GM10248 (cell line): ENCODE measurements at regions of chr5 and their contacts with region 1.

Region 1: GRCh38 chr5:36695677-36696673 is 89.6 kb downstream of the SLC1A3 start:
- DNase-seq: peak; percentile 57
- CTCF ChIP-seq: peak; percentile 50

Region 2: DNA sequence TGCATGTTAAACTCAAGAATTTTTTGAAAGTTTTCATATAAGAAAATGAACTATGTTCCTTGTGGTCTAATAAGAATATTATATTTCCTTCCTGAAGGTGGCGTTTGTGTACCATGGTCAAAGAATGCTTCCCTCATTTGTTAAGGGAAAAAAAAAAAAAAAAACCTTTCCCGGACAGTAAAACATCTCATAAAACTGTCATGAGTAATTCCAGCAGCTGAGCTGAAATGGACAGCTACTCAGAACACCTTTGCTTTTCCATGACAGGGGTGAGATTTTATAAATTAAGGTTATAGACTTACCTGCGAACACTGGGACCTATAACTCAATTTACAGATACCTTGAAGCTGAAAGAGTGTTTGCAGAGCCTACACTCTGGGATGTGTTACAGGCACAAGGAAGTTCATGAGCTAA is 281.1 kb before region 1 on chr5:
- CTCF ChIA-PET with region 1: interaction called, 17 read pairs
- POLR2A ChIA-PET with region 1: no interaction called
- DNase-seq: no peak
- CTCF ChIP-seq: peak; percentile 16

Region 3: DNA sequence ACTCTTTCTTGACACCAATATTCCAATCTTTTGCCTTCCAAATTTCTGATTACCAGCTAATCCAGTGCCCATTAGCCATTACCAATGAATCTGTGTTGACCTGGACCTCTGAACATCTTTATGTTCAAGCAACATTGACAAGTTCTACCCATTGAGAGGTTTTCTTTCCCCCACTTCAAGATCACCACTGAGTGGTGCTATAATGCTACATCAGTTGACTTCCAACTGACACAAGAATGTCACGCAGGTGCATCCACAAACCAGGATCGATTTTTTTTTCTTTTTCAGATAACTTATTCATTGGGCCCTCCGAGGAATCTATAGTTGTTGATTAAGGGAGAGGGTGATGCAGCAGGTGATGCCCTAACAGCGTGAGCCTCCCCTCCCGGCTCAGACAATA is 13.0 kb after region 1 on chr5:
- CTCF ChIA-PET with region 1: interaction called, 189 read pairs
- POLR2A ChIA-PET with region 1: interaction called, 3 read pairs
- DNase-seq: no peak
- CTCF ChIP-seq: no peak